Esophagus squamous epithelium (tissue), 5 donors: ENCODE measurements at regions of chr1 and their contacts with region 1.

Region 1: DNA sequence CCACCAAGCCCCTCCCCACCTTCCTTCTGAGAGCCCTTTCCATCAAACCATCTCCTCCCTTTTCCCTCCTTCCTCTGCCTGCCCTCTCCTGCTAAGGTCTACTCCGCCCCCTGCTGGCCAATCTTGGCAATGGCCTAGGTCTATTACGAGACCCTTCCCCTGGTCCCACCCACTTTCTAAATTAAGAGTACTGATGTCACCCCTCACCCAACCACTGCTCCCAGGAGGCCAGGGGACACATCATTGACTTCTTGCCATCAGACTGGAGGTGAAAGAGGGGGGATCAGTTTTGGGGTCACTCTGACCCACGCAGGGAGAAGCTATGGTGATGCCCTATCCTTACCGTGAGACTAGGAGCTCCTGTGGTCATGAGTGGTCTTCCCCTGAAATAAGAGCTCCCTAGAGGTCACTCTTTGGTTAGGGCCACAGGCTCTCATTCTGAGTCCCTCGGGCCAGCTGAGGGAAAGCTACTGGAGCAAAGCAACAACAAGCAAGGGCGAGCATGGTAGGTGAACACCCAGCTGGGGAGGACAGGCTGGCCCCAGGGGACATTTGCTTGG is 34.6 kb upstream of the S100A7 start:
- DNase-seq: no peak
- H3K4me3 ChIP-seq: no peak overlapping the region
- H3K27ac ChIP-seq: peak overlapping the region in 1 of 4 donors; percentile 92
- H3K4me1 ChIP-seq: peaks cover 8 to 52% (median 35%) of the 10 kb centered on the region in 3 donors
- H3K27me3 ChIP-seq: peaks cover 0 to 5% (median 0%) of the 10 kb centered on the region in 4 donors
- CTCF ChIP-seq: peak; percentile 90 to 97 (median 94)
- POLR2A ChIP-seq: no peak

Region 2: DNA sequence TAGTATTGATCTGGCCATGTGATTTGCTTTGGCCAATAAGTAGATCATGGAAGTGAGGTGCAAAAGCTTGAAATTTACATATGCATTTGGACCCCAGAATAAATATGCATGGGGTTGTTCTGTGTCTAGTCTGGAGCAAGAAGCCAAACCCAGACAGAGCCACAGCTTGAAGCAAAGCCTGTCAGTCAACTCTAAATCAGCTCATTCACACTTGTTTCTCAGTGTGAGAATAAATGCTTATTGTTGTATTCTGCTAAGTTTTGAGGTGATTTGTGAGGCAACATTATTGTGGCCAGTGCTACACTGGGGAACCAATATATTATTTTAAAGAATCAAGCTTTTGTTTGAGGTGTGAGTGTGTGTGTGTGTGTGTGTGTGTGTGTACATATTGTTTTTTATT is 170.1 kb before region 1 on chr1:
- intact Hi-C with region 1: no loop called
- DNase-seq: no peak
- H3K4me3 ChIP-seq: no peak overlapping the region
- H3K27ac ChIP-seq: no peak overlapping the region
- H3K4me1 ChIP-seq: no peaks in the 10 kb centered on the region
- H3K27me3 ChIP-seq: peaks cover 0 to 11% (median 0%) of the 10 kb centered on the region in 4 donors
- CTCF ChIP-seq: no peak
- POLR2A ChIP-seq: no peak

Region 3: GRCh38 chr1:153355468-153356071 is 139.5 kb before region 1 on chr1:
- intact Hi-C with region 1: loop called (anchors 5 kb)
- DNase-seq: no peak
- H3K4me3 ChIP-seq: no peak overlapping the region
- H3K27ac ChIP-seq: peak overlapping the region; percentile 86 to 94 (median 93)
- H3K4me1 ChIP-seq: peaks cover 11 to 53% (median 23%) of the 10 kb centered on the region in 3 donors
- H3K27me3 ChIP-seq: peaks cover 0 to 27% (median 0%) of the 10 kb centered on the region in 4 donors
- CTCF ChIP-seq: peak; percentile 16 to 88 (median 71)
- POLR2A ChIP-seq: no peak